ENCODE measurements at regions of chr1 and their contacts with region 1.

Region 1: GRCh38 chr1:165444897-165445370 is at the start of gene RXRG:
- DNase-seq: peak in 4 of 9 experiments; percentile 9 to 52 (median 23)
- ATAC-seq: no peak
- H3K4me3 ChIP-seq: no peak within 1 kb of the TSS
- H3K4me3 Mint-ChIP-seq: no peak within 1 kb of the TSS
- H3K27ac ChIP-seq: no peak within 1 kb of the TSS
- H3K27ac Mint-ChIP-seq: no peak within 1 kb of the TSS
- H3K4me1 ChIP-seq: peaks cover 16% of the 10 kb centered on the region
- H3K4me1 Mint-ChIP-seq: no peaks in the 10 kb centered on the region
- H3K27me3 ChIP-seq: peaks cover 4 to 14% of the 10 kb centered on the region in 2 experiments
- H3K27me3 Mint-ChIP-seq: peaks cover 50% of the 10 kb centered on the region
- CTCF ChIP-seq: no peak
- total RNA-seq, gene RXRG: not detected

Region 2: GRCh38 chr1:165424454-165425216 is 20.3 kb before region 1 on chr1:
- CTCF ChIA-PET with region 1: no interaction called
- POLR2A ChIA-PET with region 1: no interaction called
- intact Hi-C with region 1: loop called in 1 of 2 experiments (anchors 2 kb)
- DNase-seq: peak in 2 of 9 experiments; percentile 23 to 56
- ATAC-seq: peak; percentile 62
- H3K4me3 ChIP-seq: peak overlapping the region; percentile 19 to 24
- H3K4me3 Mint-ChIP-seq: peak overlapping the region; percentile 75
- H3K27ac ChIP-seq: peak overlapping the region; percentile 0 to 33
- H3K27ac Mint-ChIP-seq: peak overlapping the region; percentile 82
- H3K4me1 ChIP-seq: peaks cover 21% of the 10 kb centered on the region
- H3K4me1 Mint-ChIP-seq: peaks cover 25% of the 10 kb centered on the region
- H3K27me3 ChIP-seq: no peaks in the 10 kb centered on the region
- H3K27me3 Mint-ChIP-seq: no peaks in the 10 kb centered on the region
- CTCF ChIP-seq: no peak

Region 3: GRCh38 chr1:165679282-165680036 is 234.5 kb after region 1 on chr1:
- CTCF ChIA-PET with region 1: no interaction called
- POLR2A ChIA-PET with region 1: no interaction called
- intact Hi-C with region 1: no loop called
- DNase-seq: no peak
- ATAC-seq: no peak
- H3K4me3 ChIP-seq: no peak overlapping the region
- H3K4me3 Mint-ChIP-seq: no peak overlapping the region
- H3K27ac ChIP-seq: no peak overlapping the region
- H3K27ac Mint-ChIP-seq: peak overlapping the region; percentile 2
- H3K4me1 ChIP-seq: peaks cover 15% of the 10 kb centered on the region
- H3K4me1 Mint-ChIP-seq: peaks cover 20% of the 10 kb centered on the region
- H3K27me3 ChIP-seq: no peaks in the 10 kb centered on the region
- H3K27me3 Mint-ChIP-seq: no peaks in the 10 kb centered on the region
- CTCF ChIP-seq: no peak